ENCODE measurements at regions of chrX and their contacts with region 1.

Region 1: DNA sequence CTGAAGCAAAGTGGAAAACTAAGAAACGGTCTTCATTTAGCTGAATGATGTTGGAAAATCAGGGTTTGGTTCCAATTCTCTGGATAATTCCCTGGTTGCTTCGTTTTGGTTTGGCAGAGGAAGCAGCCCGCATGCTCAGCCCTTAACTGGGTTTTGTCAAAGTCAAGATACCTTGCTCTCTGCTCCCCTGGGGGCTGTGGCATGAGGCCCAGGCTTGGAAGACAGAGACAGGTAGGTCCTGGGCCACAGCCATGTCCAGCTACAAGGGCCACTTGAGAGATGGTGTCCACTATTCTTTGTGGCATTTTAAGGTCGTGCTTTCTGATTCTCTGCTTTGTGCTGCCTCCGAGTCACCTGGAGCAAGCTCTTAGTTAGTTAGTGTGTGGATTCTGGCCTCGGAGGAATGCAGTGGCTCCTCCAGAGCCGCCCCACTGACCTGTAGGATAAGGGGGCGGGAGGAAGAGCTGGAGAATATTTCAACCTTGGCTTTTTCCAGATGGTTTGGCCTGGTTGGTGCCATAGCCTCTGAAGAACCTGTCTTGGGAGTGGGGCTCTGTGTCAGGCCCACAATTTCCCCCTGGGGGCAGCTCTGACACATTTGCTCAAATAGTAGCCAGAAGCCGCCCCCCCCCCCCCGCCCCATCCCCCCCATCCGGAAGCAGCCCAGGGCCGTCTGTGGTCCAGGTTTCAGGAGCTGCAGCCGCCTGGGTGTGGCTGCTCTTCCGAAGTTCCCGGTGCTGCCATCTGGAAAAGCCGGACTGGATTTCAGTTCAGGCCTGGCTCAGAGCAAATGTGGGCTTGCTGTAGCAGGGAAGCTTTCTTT is 147.1 kb downstream of the NHS start:
- DNase-seq: peak; percentile 22
- H3K4me3 ChIP-seq: no peak overlapping the region
- H3K27ac ChIP-seq: no peak overlapping the region
- H3K4me1 ChIP-seq: peaks cover 5% of the 10 kb centered on the region
- H3K27me3 ChIP-seq: no peaks in the 10 kb centered on the region
- CTCF ChIP-seq: no peak

Region 2: DNA sequence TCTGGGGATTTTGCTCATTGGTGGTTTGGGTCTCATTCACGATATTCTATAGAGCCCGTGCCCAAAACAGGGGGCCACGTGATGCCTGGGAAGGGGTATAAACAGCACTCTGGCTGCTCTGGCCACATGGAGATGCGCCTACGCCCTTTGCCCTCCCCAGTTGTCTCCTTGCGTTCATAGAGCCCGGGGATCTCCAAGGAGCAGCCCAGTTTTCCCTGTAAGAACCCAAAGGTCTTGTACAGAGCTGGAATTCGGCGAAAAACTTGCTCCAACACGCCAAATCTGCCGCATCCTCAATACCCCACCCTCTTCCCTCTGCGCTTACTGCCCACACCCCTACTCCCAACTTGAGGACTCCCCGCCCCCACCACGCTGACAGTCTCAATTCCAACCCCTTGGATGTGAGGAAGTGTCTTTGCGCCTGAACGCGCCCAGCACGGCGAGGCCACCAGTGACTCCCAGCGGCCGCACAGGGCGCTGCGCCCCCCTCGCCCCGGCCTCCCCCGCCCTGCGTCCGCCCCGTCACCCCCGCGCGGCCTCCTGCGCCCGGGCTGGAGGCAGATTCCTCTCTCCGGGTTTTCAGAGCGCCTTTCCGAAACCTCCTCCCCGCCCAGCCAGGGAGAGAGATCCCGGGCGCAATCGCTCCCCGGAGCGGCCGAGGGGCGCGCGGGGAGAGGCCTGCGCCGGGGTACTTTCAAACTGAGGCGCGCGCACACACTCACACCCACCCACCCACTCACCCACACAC is 147.3 kb before region 1 on chrX and contains the start of gene NHS:
- intact Hi-C with region 1: loop called (anchors 10 kb)
- DNase-seq: peak; percentile 62
- H3K4me3 ChIP-seq: peak within 1 kb of the TSS; percentile 69
- H3K27ac ChIP-seq: peak within 1 kb of the TSS; percentile 66
- H3K4me1 ChIP-seq: peaks cover 16% of the 10 kb centered on the region
- H3K27me3 ChIP-seq: no peaks in the 10 kb centered on the region
- CTCF ChIP-seq: peak; percentile 62
- total RNA-seq, gene NHS: 1.0 TPM

Measured in left ventricle myocardium inferior (tissue), 1 donor.